HepG2 (cell line): ENCODE measurements at regions of chr14 and their contacts with region 1.

Region 1: GRCh38 chr14:20469242-20469889 is at the start of gene PNP:
- DNase-seq: peak; percentile 88
- ATAC-seq: peak; percentile 97
- H3K4me3 ChIP-seq: peak within 1 kb of the TSS; percentile 54 to 93 (median 74)
- H3K27ac ChIP-seq: peak within 1 kb of the TSS; percentile 53
- H3K4me1 ChIP-seq: peaks cover 52% of the 10 kb centered on the region
- H3K27me3 ChIP-seq: no peaks in the 10 kb centered on the region
- CTCF ChIP-seq: peak; percentile 48
- EP300 ChIP-seq: no peak
- POLR2A ChIP-seq: peak; percentile 100
- RAD21 ChIP-seq: peak; percentile 60; the same call in 1 of the 2 replicates
- total RNA-seq, gene PNP: 74.8 and 117 TPM in 2 replicates

Region 2: DNA sequence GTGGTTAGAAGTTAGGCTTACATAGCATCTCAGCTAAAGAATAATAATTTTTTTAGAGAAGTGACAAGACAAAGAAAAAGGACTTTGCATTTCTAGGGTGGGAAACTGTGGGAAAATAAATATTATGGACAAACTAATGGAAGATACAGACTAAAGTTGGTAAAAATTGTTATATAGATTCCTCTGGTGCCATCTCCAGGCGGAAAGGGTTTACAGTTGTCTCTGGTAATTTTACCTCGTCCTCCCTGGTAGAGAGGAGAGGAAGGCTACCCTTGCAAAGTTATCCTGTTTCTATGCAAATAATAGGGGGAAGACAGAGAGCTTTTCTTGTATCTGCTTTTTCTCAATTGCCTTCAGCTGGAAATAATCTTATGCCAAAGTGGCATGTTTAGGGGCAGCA is 273.5 kb before region 1 on chr14:
- CTCF ChIA-PET with region 1: no interaction called
- POLR2A ChIA-PET with region 1: no interaction called
- in situ Hi-C with region 1: no loop called
- intact Hi-C with region 1: no loop called
- DNase-seq: no peak
- ATAC-seq: no peak
- H3K4me3 ChIP-seq: no peak overlapping the region
- H3K27ac ChIP-seq: no peak overlapping the region
- H3K4me1 ChIP-seq: no peaks in the 10 kb centered on the region
- H3K27me3 ChIP-seq: 0 out of 5 replicates have a peak, but pooled peaks cover 0 to 8% of the 10 kb centered on the region in 2 experiments
- CTCF ChIP-seq: no peak
- EP300 ChIP-seq: no peak
- POLR2A ChIP-seq: no peak
- RAD21 ChIP-seq: no peak

Region 3: DNA sequence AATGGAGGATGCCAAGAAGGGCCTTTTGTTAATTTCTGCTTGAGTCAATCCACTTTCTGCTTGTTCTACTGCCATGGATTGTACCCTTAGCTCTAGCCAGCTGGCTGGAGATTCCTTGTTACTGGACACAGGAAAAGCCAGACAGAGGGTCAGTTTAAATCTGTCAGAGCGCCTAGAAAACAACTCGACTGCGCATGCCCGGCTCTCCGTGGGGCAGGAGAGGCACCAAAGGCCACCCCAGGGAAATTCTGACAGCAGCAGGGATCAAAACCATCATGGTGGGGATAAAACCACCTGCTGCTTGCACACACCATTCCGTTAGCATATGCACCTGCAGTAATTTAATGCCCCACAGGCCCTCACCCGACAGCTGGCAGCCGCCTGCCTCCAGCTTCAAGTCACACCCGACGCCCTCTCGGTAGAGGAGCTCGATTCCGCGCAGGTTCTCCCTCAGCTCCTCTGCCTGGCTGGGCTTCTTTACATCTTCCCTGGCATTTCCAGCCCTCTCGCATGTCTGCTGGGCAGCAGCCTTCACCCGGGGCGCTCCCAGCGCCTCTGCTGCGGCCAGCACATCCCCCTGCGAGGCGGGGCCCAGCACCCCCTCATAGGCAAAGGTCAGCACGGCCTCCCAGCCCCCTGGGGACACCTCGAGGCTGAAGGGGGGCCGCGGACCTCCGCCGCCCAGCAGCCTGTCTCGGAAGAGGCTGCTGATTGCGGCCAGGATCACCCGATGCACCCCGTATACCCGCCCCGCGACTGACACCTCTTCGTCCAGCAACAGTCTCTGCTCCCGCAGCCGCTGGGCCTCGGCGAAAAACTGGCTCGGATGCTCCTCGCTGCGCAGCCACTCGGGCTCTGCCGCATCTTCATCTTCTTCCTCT is 34.4 kb before region 1 on chr14:
- CTCF ChIA-PET with region 1: no interaction called
- POLR2A ChIA-PET with region 1: no interaction called
- in situ Hi-C with region 1: no loop called
- intact Hi-C with region 1: no loop called
- DNase-seq: no peak
- ATAC-seq: no peak
- H3K4me3 ChIP-seq: no peak overlapping the region
- H3K27ac ChIP-seq: no peak overlapping the region
- H3K4me1 ChIP-seq: peaks cover 19% of the 10 kb centered on the region
- H3K27me3 ChIP-seq: peaks cover 1 to 9% of the 10 kb centered on the region in 2 experiments; a peak in 3 of 5 replicates
- CTCF ChIP-seq: no peak
- EP300 ChIP-seq: no peak
- POLR2A ChIP-seq: no peak
- RAD21 ChIP-seq: no peak

Region 4: DNA sequence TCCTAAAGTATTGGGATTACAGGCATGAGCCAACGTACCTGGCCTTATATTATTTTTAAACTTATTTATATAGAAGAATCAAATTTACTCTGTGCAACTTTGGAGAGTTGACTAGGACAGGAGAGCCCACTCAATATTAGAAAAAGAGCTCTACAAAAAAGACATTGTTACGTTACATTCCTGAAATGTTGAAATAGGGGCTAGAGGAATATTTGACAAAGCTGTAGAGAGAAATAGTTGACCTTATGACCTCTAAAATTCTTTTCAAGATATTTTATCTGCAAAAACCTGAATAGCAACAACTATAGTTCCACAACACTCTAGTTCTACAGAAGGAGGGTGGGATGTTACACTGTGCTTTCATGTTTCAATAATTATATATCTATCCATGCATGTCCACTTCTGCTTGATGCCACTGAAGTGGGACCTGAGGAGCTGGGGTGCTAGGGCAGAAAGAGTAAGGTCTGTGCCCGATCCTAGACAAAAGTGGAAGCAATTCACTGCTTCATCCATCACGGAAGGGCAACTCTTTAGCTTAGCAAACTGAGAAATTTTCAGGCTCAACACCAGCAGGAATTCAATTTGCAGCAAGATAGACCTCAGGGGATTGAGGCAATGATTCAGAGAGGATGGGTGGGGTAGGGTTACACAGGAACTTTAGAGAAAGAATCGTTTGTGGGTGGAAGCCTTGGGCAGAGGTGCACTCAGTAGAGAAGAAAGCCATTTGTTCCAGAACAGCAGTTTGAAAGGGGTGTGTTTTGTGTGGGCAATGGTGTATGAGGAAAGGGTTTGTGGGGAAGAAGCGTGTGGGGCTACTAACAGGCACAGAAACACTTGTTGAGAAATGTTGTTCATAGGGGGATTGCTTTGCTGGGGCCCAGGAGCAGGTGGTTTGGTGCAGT is 20.0 kb after region 1 on chr14:
- CTCF ChIA-PET with region 1: no interaction called
- POLR2A ChIA-PET with region 1: interaction called, 4 read pairs
- in situ Hi-C with region 1: no loop called
- intact Hi-C with region 1: loop called (anchors 1 kb)
- DNase-seq: peak; percentile 78
- ATAC-seq: peak; percentile 66
- H3K4me3 ChIP-seq: no peak overlapping the region; a peak in 1 of 6 replicates
- H3K27ac ChIP-seq: no peak overlapping the region
- H3K4me1 ChIP-seq: peaks cover 33% of the 10 kb centered on the region
- H3K27me3 ChIP-seq: 0 out of 5 replicates have a peak, but pooled peaks cover 0 to 6% of the 10 kb centered on the region in 2 experiments
- CTCF ChIP-seq: no peak
- EP300 ChIP-seq: 0 out of 4 replicates have a peak, but pooled peaks of 1 of the 2 experiments have one; percentile 9
- POLR2A ChIP-seq: no peak
- RAD21 ChIP-seq: no peak

Region 5: DNA sequence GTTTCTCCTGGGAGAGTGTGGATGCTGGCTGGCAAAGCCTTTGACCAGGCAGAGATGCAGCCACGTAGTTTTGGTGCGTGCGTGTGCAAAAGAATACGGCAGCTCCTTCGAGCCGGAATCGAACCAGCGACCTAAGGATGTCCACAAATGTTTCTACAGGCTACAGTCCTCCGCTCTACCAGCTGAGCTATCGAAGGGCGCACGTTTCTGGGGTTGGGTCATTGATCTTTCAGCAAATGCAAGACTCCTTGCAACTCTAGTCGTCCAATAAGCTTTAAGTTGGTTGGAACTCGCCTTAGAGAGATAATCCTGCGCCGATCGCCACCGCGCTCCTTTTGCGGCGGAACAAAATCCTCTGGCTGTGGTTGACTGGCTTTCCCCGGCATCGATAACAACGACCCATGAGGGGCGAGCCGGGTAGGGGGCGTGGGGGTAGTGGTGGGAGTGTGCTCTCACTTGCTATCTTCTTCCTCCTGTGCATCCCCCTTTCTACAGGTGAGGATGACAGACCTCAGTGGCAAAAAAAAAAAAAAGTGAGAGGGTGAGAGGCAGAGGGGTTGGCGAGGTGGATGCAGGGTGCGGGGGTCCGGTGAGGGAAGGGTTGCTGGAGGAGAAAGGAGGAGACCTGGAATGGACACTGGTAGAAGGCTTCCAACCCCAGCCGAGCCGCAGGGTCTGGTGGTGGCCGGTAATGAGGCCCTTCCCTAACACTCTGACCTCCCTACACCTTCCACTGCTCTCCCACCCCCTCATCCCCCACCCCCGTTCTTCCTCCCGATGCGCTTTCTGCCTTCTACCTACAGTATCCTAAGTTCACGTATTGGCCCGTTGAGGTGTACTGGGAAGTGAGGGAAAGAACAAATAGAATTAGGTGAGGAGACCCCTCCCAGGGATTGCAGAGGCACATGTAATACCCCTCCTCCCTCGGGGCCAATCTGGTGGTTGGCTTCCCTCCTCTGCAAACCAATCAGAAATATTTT is 183.9 kb after region 1 on chr14:
- CTCF ChIA-PET with region 1: no interaction called
- POLR2A ChIA-PET with region 1: no interaction called
- in situ Hi-C with region 1: no loop called
- intact Hi-C with region 1: no loop called
- DNase-seq: peak; percentile 32
- ATAC-seq: peak; percentile 22
- H3K4me3 ChIP-seq: peak overlapping the region in 2 of 3 experiments; percentile 25 to 44; a peak in 2 of 6 replicates
- H3K27ac ChIP-seq: no peak overlapping the region
- H3K4me1 ChIP-seq: peaks cover 31% of the 10 kb centered on the region
- H3K27me3 ChIP-seq: peaks cover 0 to 23% of the 10 kb centered on the region in 2 experiments; a peak in 3 of 5 replicates
- CTCF ChIP-seq: no peak
- EP300 ChIP-seq: no peak
- POLR2A ChIP-seq: no peak
- RAD21 ChIP-seq: no peak